Activated CD8-positive, alpha-beta T cell treated with anti-CD3 and anti-CD28 coated beads, Interleukin-2, amount 10 ng/mL, durations not matched to agents 7 days and 5 days (primary cell): ENCODE measurements at regions of chr1 and their contacts with region 1.

Region 1: DNA sequence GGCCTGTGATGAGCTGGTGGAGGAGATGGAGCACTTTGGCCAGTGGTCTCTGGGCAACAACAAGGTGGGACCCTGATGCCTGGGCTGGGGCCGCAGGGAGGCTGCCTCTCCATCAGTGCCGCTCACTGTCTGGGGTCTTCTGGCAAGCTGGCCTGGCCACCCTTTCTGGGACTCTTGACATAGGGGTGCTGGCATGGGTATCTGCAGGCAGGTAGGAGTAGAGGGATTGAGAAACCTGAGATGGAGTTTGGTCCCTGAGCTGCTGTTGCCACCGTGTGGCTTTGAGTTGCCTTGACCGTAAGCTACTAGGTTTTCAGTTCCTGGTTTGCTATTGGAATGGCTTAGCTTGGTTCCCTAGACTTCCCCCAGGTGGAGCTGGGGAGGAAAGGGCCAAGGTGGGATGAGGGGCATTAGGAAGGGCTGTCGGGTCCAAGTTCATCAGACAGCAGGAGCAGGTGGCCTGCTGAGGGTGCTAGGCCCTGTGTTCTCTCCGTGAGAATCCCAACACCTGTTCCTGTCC is 13.2 kb upstream of the MFN2 start:
- DNase-seq: peak; percentile 27
- ATAC-seq: no peak
- H3K4me3 Mint-ChIP-seq: no peak overlapping the region
- H3K27ac Mint-ChIP-seq: no peak overlapping the region
- H3K4me1 Mint-ChIP-seq: peaks cover 7% of the 10 kb centered on the region
- H3K27me3 Mint-ChIP-seq: no peaks in the 10 kb centered on the region

Region 2: DNA sequence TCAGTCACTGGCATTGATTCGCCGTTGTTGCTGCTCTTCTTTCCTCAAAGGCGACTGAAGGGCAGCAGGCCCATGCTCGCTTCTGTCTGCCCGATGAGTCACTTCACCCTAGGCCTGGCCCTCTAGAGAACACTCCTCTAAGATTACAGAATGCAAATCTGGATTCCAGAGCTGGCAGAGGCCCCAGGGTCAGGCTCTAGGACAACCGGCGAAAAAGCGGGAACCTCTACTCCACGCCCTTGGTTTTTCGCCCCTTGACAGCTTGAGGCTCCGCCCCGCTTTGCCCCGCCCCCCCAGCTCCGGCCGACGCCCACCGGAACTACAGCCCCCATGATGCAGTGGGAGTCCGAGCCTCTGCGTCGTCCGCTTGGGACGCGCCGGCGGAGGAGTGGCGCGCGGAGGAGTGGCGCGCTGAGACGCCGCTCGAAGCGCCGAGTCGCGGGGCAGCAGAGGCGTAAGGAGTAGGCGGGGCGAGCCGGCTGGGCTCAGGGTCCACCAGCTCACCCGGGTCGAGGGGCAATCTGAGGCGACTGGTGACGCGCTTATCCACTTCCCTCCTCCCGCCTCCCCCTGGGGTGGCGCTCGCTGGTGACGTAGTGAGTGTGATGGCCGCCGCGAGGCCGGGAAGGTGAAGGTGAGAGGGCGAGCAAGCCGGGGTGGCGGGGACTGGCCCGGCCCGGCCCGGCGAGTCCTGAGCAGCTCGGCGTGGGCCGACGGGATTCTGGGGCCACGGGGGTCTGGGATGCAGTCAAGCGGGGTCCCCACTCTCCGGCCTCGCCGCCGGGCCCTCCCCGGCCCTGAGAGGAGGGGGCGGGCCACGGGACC is 13.0 kb after region 1 on chr1 and contains the start of gene MFN2:
- CTCF ChIA-PET with region 1: interaction called, 15 read pairs
- POLR2A ChIA-PET with region 1: interaction called, 5 read pairs
- DNase-seq: peak; percentile 97
- ATAC-seq: peak; percentile 97
- H3K4me3 Mint-ChIP-seq: peak within 1 kb of the TSS; percentile 95
- H3K27ac Mint-ChIP-seq: peak within 1 kb of the TSS; percentile 98
- H3K4me1 Mint-ChIP-seq: peaks cover 37% of the 10 kb centered on the region
- H3K27me3 Mint-ChIP-seq: no peaks in the 10 kb centered on the region
- total RNA-seq, gene MFN2: 55.1 to 60.4 TPM